ENCODE measurements at regions of chr4 and their contacts with region 1.

Region 1: DNA sequence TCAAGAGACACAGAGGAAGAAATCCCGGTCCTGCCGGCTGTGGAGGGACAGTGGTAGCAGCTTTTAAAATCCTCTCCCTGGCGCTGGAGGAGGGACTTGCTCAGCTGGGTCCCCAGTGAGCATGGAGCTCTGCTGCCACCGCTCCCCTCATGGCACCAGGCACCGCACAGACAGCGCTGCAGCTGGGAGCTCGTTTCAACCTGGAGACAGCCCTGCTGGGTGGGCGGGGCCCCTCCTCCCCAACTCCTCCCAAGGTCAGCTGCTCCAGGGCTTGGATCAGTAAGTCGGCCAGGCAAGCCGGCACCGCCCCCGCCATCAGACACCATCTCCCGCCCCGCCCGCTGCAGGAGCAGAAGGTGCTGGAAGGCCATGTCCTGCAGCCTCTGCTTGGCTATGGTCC is 16.4 kb downstream of the ZFYVE28 start:
- DNase-seq: peak; percentile 21
- H3K4me3 ChIP-seq: no peak overlapping the region
- H3K27ac ChIP-seq: no peak overlapping the region
- H3K4me1 ChIP-seq: peaks cover 9% of the 10 kb centered on the region
- H3K27me3 ChIP-seq: peaks cover 4% of the 10 kb centered on the region
- CTCF ChIP-seq: no peak

Region 2: GRCh38 chr4:2484993-2485392 is 83.0 kb after region 1 on chr4:
- CTCF ChIA-PET with region 1: no interaction called
- dilution Hi-C with region 1: loop called (anchors 5 kb)
- in situ Hi-C with region 1: no loop called
- intact Hi-C with region 1: no loop called
- DNase-seq: no peak
- H3K4me3 ChIP-seq: no peak overlapping the region
- H3K27ac ChIP-seq: no peak overlapping the region
- H3K4me1 ChIP-seq: peaks cover 9% of the 10 kb centered on the region
- H3K27me3 ChIP-seq: no peaks in the 10 kb centered on the region
- CTCF ChIP-seq: no peak

Region 3: DNA sequence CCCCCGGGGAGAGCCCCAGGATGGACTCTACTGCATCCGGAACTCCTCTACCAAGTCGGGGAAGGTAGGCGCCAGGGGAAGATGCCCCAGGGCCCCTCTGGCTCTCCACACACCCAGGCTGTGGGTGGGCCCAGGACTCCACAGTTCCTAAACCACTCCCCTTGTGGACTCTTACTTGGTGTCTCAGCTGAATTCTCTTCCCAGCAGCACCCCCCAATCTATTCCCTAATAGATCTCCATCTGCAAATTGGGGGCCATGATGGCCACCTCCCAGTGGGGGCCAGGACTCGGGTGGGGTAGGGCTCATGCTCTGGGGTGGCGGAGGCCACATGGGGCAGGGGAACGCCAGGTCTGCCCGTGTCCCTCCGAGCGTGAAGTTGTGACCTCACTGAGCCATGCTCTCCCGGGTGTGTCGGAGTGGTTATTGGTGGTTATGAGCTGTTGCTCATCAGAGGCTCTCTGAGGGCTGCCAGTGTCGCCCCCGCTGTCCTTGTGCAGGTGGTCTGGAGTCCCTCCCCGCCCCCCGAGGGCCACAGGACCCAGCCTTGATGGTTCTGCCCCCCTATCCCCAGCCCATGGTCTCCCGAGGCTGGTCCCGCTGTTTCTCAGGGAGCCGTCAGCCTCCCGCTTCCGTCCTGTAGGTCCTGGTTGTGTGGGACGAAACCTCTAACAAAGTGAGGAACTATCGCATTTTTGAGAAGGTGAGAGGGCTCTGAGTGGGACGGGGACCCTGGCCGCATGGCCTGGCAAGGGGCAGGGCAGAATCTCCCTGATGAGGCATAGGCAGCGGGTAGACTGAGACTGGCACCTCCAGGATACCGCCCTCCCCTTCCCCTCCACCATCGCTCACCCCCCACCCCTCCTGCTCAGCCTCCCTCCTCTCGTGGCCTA is 430.6 kb after region 1 on chr4:
- CTCF ChIA-PET with region 1: no interaction called
- dilution Hi-C with region 1: no loop called
- in situ Hi-C with region 1: no loop called
- intact Hi-C with region 1: no loop called
- DNase-seq: no peak
- H3K4me3 ChIP-seq: no peak overlapping the region
- H3K27ac ChIP-seq: no peak overlapping the region
- H3K4me1 ChIP-seq: no peaks in the 10 kb centered on the region
- H3K27me3 ChIP-seq: no peaks in the 10 kb centered on the region
- CTCF ChIP-seq: no peak

Measured in mammary epithelial cell (primary cell).